Lower leg skin (tissue), 4 donors: ENCODE measurements at regions of chr3 and their contacts with region 1.

Region 1: GRCh38 chr3:153595186-153595815 is 433.3 kb downstream of the RAP2B start:
- DNase-seq: no peak
- H3K4me3 ChIP-seq: no peak overlapping the region
- CTCF ChIP-seq: no peak
- POLR2A ChIP-seq: no peak

Region 2: GRCh38 chr3:153043729-153044328 is 551.5 kb before region 1 on chr3:
- intact Hi-C with region 1: loop called (anchors 10 kb)
- DNase-seq: no peak
- H3K4me3 ChIP-seq: no peak overlapping the region
- CTCF ChIP-seq: no peak
- POLR2A ChIP-seq: no peak

Region 3: DNA sequence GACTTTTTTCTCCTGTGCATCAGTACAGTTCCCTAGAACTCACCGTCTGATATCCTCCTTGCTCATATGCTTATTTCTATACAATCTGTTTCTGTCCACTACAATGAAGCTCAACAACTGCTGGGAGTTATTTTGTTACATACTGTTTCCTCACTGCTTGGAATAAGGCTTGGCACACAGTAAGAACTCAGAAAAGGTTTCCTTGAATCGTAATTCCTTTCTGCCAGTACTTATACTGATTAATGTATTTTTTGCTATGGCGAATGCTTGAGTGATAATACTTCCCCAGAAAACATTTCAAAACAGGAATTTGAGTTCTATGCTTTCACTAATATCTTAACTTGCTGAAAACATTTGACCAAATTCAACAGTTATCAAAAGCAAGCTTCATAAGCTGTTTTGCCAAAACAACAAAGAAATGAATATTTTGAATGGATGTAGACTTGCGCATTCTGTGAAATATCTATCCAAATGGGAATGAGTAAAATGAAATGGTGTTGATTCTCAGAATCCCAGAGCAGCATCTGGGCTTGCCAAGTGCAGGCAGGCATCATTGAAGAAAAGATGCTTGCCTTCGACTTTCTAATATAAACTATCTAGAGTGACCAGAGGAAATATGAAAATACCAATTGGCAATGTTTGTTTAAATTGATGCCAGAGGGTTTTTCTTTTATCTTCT is 147.0 kb before region 1 on chr3:
- intact Hi-C with region 1: no loop called
- DNase-seq: no peak
- H3K4me3 ChIP-seq: no peak overlapping the region
- CTCF ChIP-seq: no peak
- POLR2A ChIP-seq: no peak

Region 4: GRCh38 chr3:153866901-153867300 is 271.6 kb after region 1 on chr3:
- intact Hi-C with region 1: no loop called
- DNase-seq: no peak
- H3K4me3 ChIP-seq: no peak overlapping the region
- CTCF ChIP-seq: no peak
- POLR2A ChIP-seq: no peak